ENCODE measurements at regions of chr17 and their contacts with region 1.

Region 1: GRCh38 chr17:65122836-65123756 is 14.1 kb upstream of the RGS9 start:
- DNase-seq: peak; percentile 87
- H3K4me3 Mint-ChIP-seq: peak overlapping the region; percentile 78
- H3K27ac Mint-ChIP-seq: peak overlapping the region; percentile 87
- H3K4me1 Mint-ChIP-seq: peaks cover 7% of the 10 kb centered on the region
- H3K27me3 Mint-ChIP-seq: peaks cover 12% of the 10 kb centered on the region
- CTCF ChIP-seq: no peak

Region 2: DNA sequence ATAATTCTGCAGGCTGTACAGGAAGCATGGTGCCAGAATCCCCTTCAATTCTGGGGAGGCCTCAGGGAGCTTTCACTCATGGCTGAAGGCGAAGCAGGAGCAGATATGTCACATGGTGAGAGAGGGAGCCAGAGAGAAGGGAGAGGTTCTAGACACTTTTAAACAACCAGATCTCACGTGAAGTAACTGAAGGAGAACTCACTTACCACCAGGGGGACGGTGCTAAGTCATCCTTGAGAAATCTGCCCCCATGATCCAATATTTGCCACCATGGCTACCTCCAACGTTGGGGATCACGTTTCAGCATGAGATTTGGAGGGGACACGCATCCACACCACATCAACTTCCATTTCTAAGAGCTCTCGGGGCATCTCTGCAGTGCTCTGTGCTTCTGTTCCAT is 29.2 kb before region 1 on chr17:
- CTCF ChIA-PET with region 1: no interaction called
- POLR2A ChIA-PET with region 1: no interaction called
- intact Hi-C with region 1: no loop called
- DNase-seq: no peak
- H3K4me3 Mint-ChIP-seq: no peak overlapping the region
- H3K27ac Mint-ChIP-seq: no peak overlapping the region
- H3K4me1 Mint-ChIP-seq: peaks cover 6% of the 10 kb centered on the region
- H3K27me3 Mint-ChIP-seq: no peaks in the 10 kb centered on the region
- CTCF ChIP-seq: no peak

Region 3: GRCh38 chr17:65108152-65108551 is 14.9 kb before region 1 on chr17:
- CTCF ChIA-PET with region 1: interaction called, 3 read pairs
- POLR2A ChIA-PET with region 1: interaction called, 24 read pairs
- intact Hi-C with region 1: no loop called
- DNase-seq: no peak
- H3K4me3 Mint-ChIP-seq: no peak overlapping the region
- H3K27ac Mint-ChIP-seq: peak overlapping the region; percentile 67
- H3K4me1 Mint-ChIP-seq: peaks cover 35% of the 10 kb centered on the region
- H3K27me3 Mint-ChIP-seq: no peaks in the 10 kb centered on the region
- CTCF ChIP-seq: no peak

Region 4: DNA sequence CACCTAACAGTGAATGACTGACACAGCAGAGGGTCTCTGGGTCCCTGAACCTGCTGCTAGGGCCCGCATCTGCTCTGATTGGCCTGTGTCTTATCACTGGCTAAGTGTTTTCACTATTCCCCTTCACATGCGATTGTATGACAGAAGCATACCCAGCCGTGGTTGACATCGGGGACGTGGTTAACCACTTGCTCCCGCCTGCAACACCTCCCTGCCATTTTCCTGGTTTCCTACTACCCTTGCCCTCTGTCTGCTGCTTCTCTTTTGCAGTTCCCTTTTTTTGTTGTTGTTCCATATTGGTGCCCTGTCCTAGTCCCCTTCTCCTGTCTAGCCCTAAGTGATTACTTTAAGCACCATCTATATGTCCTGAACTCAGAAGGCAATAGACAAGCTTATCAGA is 191.1 kb after region 1 on chr17:
- CTCF ChIA-PET with region 1: no interaction called
- POLR2A ChIA-PET with region 1: no interaction called
- intact Hi-C with region 1: no loop called
- DNase-seq: no peak
- H3K4me3 Mint-ChIP-seq: no peak overlapping the region
- H3K27ac Mint-ChIP-seq: no peak overlapping the region
- H3K4me1 Mint-ChIP-seq: no peaks in the 10 kb centered on the region
- H3K27me3 Mint-ChIP-seq: peaks cover 69% of the 10 kb centered on the region
- CTCF ChIP-seq: no peak

Measured in MCF 10A (cell line).